OCI-LY7 (cell line): ENCODE measurements at regions of chr18 and their contacts with region 1.

Region 1: GRCh38 chr18:27355019-27355707 is 170.1 kb upstream of the CHST9 start:
- DNase-seq: no peak
- H3K4me3 ChIP-seq: no peak overlapping the region
- H3K27ac ChIP-seq: no peak overlapping the region
- H3K4me1 ChIP-seq: no peaks in the 10 kb centered on the region
- CTCF ChIP-seq: no peak

Region 2: GRCh38 chr18:27582760-27583412 is 227.7 kb after region 1 on chr18:
- CTCF ChIA-PET with region 1: no interaction called
- POLR2A ChIA-PET with region 1: no interaction called
- intact Hi-C with region 1: loop called (anchors 10 kb)
- DNase-seq: no peak
- H3K4me3 ChIP-seq: no peak overlapping the region
- H3K27ac ChIP-seq: no peak overlapping the region
- H3K4me1 ChIP-seq: no peaks in the 10 kb centered on the region
- CTCF ChIP-seq: no peak